ENCODE measurements at regions of chr1 and their contacts with region 1.

Region 1: DNA sequence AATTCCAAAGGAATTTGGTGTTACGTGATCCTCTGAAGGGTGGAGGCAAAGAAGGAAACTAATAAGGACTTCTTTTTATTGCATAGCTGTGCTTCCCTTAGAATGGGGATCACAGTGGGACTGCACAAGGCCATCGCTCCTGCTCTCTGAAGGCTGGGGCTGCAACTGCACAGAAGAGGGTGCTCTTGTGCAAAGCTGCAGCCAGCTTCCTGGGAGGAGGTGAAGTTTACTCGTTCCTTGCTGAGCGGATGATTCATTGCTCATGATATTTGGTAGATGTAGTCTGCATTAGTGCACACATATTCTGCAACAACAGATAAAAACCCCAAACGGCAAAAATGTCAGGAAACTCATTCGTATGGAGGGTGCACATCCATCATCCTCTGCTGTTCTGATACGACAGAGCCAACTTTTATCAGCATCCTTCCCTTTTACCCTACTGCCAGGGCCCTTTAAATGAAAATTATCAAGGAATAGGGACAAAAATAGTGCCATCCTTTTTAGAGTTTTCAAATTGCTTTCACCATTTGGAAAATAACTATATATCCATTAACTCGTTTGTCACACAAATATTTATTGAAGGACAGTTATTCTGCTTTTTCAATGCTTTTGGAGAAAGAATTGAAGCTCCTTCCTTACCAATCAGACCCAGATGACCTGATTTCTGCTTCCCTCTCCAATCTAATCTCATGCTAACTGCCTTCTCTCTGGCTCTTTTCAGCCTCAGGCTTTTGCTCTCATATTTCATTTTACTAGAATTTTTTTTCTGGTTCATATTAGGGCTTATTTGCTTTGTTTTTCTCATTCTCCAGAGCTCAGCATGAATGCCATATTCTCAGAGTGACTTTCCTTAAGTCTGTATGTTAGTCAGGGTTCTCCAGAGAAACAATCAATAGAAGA is 263.6 kb downstream of the DUSP10 start:
- DNase-seq: peak; percentile 70
- H3K4me3 Mint-ChIP-seq: no peak overlapping the region
- H3K27ac Mint-ChIP-seq: no peak overlapping the region
- H3K4me1 Mint-ChIP-seq: peaks cover 3% of the 10 kb centered on the region
- H3K27me3 Mint-ChIP-seq: peaks cover 6% of the 10 kb centered on the region

Region 2: DNA sequence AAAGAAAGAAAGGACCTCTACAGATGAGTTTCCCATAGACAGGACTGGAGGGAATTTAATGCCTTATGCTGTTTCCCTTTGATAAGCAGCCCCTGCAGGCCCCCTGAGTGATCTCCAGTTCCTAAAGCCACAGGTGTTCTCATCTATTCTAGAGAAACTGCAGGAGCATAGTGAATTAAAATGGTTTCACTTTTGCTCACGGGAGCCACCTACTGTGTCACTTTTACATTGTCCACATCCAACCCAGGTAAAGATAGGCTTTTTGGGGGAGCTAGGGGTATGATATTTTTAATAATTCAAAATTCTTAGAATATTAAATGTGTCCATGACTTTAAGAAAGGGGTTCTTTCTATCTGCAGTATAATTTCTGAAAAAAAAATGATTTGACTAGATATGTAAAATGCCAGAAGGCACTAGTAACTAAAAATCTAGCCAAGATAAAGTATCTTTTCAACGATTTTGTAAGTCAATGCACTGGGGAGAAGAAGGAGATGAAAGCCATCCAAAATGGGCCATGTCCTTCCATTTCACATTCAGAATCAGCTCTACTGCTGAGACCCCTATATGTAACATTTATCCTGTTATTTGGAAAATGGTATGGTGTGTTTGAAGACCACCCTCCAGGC is 530.9 kb after region 1 on chr1:
- CTCF ChIA-PET with region 1: interaction called, 13 read pairs
- POLR2A ChIA-PET with region 1: no interaction called
- intact Hi-C with region 1: loop called (anchors 1 kb)
- DNase-seq: peak; percentile 27
- H3K4me3 Mint-ChIP-seq: no peak overlapping the region
- H3K27ac Mint-ChIP-seq: no peak overlapping the region
- H3K4me1 Mint-ChIP-seq: no peaks in the 10 kb centered on the region
- H3K27me3 Mint-ChIP-seq: no peaks in the 10 kb centered on the region

Region 3: GRCh38 chr1:222167111-222167510 is 688.8 kb after region 1 on chr1:
- CTCF ChIA-PET with region 1: interaction called, 4 read pairs
- POLR2A ChIA-PET with region 1: no interaction called
- intact Hi-C with region 1: loop called (anchors 10 kb)
- DNase-seq: peak; percentile 38
- H3K4me3 Mint-ChIP-seq: no peak overlapping the region
- H3K27ac Mint-ChIP-seq: no peak overlapping the region
- H3K4me1 Mint-ChIP-seq: peaks cover 2% of the 10 kb centered on the region
- H3K27me3 Mint-ChIP-seq: no peaks in the 10 kb centered on the region